Gastrocnemius medialis (tissue), 4 donors: ENCODE measurements at regions of chr1 and their contacts with region 1.

Region 1: DNA sequence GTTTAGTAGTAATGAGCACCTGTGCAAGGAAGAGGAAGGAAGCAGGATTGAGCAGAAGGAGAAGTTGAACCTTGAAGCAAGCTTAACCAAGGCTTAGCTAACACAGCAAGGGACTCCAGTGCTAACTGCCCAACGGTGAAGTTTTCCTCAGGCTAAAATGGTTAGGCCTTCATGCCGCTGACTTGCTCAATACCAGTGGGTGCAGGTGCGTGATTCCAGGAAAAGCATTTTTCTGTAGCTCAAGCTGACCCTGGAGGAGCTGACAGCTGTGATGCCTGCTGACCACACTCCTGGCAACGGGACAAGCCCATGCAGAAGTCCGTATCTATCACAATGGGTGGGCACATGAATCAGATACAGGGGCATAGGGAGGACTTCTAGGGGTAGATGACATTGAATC is 76.5 kb upstream of the FGGY start:
- DNase-seq: no peak
- ATAC-seq: no peak
- H3K4me3 ChIP-seq: no peak overlapping the region
- H3K27ac ChIP-seq: no peak overlapping the region
- H3K4me1 ChIP-seq: peaks cover 0 to 14% of the 10 kb centered on the region in 2 donors
- H3K27me3 ChIP-seq: no peaks in the 10 kb centered on the region
- CTCF ChIP-seq: no peak
- POLR2A ChIP-seq: no peak

Region 2: DNA sequence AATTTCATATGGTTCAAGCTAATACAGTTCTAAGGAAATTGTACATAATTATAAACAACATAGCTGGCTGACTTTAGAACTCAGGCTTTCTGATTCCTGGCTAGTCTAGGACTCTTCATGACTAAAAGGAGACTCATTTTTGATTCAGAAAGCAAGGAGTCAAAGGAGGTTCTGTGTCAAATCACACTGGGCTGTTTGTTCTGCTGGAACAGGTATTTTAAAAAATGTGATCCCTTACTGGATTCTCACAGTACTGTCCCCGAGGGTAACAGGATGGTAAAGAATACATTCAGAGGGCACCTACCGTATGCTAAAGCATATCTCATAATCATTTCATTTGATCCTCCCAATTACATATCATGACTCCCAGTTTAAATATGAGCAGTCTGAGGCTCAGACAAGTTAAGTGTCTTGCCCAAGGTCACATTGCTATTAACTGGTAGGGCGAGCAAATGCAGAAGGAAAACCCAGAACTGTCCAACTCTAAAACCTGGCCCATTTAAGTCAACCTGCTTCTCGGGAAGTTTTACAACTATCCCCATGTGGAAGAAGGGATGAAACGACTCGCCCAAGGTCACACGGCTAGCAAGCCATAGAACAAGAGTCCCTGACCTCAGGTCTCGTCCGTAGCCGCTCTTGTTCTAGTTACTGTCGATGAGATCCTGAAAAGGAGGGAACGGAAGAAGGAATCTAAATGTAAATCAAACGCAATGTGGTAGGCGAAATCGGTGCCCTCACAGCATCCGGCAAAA is 521.2 kb before region 1 on chr1:
- in situ Hi-C with region 1: no loop called
- intact Hi-C with region 1: no loop called
- DNase-seq: no peak
- ATAC-seq: peak; percentile 40 to 52
- H3K4me3 ChIP-seq: peak overlapping the region; percentile 76 to 99 (median 79)
- H3K27ac ChIP-seq: peak overlapping the region; percentile 81 to 90 (median 88)
- H3K4me1 ChIP-seq: peaks cover 10 to 21% of the 10 kb centered on the region in 2 donors
- H3K27me3 ChIP-seq: no peaks in the 10 kb centered on the region
- CTCF ChIP-seq: no peak
- POLR2A ChIP-seq: no peak

Region 3: DNA sequence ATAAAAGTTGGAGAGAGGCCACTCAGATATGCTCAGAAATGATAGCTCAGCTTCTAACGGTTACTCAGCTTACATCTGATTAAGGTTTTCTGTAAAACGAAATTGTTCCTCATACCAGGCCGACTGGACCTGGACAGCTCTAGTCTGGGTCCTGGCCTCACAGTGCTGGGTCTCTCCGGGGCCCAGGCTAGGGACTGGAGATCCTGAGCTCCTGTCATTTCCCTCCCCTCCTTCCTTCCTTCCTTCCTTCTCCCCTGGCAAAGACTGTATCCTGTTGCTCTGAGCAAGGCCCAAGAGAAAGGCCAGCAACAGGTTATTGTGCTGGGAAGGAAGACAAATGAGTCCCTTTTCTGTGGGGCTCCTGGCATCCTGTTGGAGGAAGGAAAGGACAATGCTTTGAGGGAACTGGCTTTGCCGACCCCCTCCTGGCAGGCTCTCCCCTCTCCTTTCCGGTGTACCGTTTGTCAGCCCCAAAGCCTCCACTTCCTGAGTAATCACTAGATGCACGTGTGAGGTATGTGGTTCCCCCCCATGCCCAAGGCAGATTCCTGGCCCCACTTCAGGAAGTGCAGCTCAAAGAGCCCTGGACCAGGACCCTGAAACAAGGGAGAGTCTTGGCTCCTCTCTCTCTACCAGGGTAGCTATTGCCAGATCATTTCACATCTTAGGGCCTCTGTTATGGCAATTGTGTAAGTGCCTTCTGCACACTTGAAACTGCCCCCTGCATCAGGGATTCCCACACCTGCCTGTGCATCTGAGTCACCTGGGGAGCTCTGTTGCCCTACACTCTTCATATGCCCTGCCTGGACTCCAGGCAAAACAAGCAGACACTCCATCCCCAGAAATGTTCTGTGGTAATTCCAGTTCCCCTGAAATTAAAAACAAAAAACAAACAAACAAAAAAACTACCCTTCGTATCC is 136.2 kb before region 1 on chr1:
- in situ Hi-C with region 1: no loop called
- intact Hi-C with region 1: no loop called
- DNase-seq: no peak
- ATAC-seq: peak; percentile 34 to 51
- H3K4me3 ChIP-seq: no peak overlapping the region
- H3K27ac ChIP-seq: peak overlapping the region in 3 of 4 donors; percentile 12 to 52 (median 24)
- H3K4me1 ChIP-seq: peaks cover 0 to 10% of the 10 kb centered on the region in 2 donors
- H3K27me3 ChIP-seq: no peaks in the 10 kb centered on the region
- CTCF ChIP-seq: no peak
- POLR2A ChIP-seq: no peak

Region 4: GRCh38 chr1:59204001-59204400 is 16.4 kb before region 1 on chr1:
- in situ Hi-C with region 1: no loop called
- intact Hi-C with region 1: loop called (anchors 2 kb)
- DNase-seq: peak; percentile 36 to 58
- ATAC-seq: peak; percentile 78 to 90
- H3K4me3 ChIP-seq: no peak overlapping the region
- H3K27ac ChIP-seq: peak overlapping the region; percentile 19 to 40 (median 31)
- H3K4me1 ChIP-seq: peaks cover 0 to 12% of the 10 kb centered on the region in 2 donors
- H3K27me3 ChIP-seq: no peaks in the 10 kb centered on the region
- CTCF ChIP-seq: no peak
- POLR2A ChIP-seq: no peak